ENCODE measurements at regions of chr14 and their contacts with region 1.

Region 1: GRCh38 chr14:50003213-50004031 is 110.5 kb downstream of the ARF6 start:
- DNase-seq: peak; percentile 89
- ATAC-seq: peak; percentile 9
- H3K4me3 ChIP-seq: peak overlapping the region; percentile 64
- H3K27ac ChIP-seq: peak overlapping the region; percentile 97
- H3K4me1 ChIP-seq: peaks cover 72% of the 10 kb centered on the region
- H3K27me3 ChIP-seq: no peaks in the 10 kb centered on the region
- CTCF ChIP-seq: peak; percentile 32; the same call in 1 of the 2 replicates

Region 2: GRCh38 chr14:49816844-49817243 is 186.6 kb before region 1 on chr14:
- CTCF ChIA-PET with region 1: no interaction called
- POLR2A ChIA-PET with region 1: no interaction called
- intact Hi-C with region 1: no loop called
- DNase-seq: no peak
- ATAC-seq: no peak
- H3K4me3 ChIP-seq: no peak overlapping the region
- H3K27ac ChIP-seq: no peak overlapping the region
- H3K4me1 ChIP-seq: no peaks in the 10 kb centered on the region
- H3K27me3 ChIP-seq: no peaks in the 10 kb centered on the region
- CTCF ChIP-seq: no peak

Region 3: DNA sequence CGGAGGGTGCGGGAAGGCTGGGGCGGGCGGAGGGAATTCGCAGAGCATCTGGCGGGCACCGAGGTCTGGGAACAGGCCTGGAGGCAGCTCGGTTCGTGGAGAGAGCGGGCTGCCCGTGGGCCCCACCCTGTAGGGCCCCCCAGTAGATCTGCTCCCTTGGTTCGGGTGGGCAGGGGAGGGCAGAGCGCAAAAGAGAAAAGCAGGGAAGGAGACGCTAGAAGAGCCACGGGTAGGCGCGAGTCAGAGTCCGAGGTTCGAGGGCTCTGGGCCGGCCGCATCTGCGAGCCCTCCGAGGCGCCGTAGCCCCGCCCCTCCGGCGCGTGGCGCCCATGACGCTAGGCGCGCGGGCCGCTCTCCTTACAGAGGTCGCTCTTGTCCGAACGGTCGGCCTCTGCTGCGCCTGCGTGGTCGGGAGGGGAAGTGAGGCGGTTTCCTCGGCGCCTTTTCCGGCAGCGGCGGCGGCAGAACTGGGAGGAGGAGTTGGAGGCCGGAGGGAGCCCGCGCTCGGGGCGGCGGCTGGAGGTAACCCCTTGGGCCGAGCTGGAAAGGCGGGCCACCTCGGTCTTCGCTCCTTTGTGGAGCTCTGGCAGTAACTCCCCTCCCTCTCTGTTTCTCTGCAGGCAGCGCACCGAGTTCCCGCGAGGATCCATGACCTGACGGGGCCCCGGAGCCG is 110.7 kb before region 1 on chr14 and contains the start of gene ARF6:
- CTCF ChIA-PET with region 1: interaction called, 5 read pairs
- POLR2A ChIA-PET with region 1: interaction called, 28 read pairs
- intact Hi-C with region 1: loop called (anchors 1 kb)
- DNase-seq: peak; percentile 99
- ATAC-seq: peak; percentile 81
- H3K4me3 ChIP-seq: peak within 1 kb of the TSS; percentile 91
- H3K27ac ChIP-seq: peak within 1 kb of the TSS; percentile 94
- H3K4me1 ChIP-seq: peaks cover 24% of the 10 kb centered on the region
- H3K27me3 ChIP-seq: no peaks in the 10 kb centered on the region
- CTCF ChIP-seq: no peak
- total RNA-seq, gene ARF6: 86.4 and 107 TPM in 2 replicates

Region 4: DNA sequence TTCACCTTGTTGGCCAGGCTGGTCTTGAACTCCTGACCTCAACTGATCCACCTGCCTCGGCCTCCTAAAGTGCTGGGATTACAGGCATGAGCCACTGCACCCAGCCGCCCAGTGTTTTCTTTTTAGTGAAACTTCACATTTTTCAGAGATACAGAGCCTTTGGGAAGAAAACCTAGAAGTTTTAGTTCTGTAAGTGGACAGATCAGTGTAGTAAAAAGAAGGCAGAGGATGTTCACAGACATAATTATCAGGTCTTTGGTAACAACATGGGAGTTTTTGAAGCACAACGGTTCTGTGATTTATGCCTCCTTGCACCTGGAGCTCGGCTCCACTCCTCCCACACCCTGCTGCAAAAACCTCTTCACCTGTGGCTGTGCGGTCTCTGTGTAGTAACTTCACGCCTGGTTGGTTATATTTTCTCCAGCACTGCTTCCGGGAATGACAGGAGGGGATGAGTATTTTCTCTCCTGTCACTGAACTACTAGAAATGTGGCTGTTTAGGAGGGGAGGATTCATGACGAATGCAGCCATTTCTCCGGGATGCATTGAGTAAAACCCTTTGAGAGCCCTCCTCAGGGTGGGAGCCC is 43.5 kb before region 1 on chr14:
- CTCF ChIA-PET with region 1: interaction called, 6 read pairs
- POLR2A ChIA-PET with region 1: no interaction called
- intact Hi-C with region 1: loop called (anchors 1 kb)
- DNase-seq: no peak
- ATAC-seq: no peak
- H3K4me3 ChIP-seq: no peak overlapping the region
- H3K27ac ChIP-seq: no peak overlapping the region
- H3K4me1 ChIP-seq: peaks cover 30% of the 10 kb centered on the region
- H3K27me3 ChIP-seq: no peaks in the 10 kb centered on the region
- CTCF ChIP-seq: no peak

Region 5: DNA sequence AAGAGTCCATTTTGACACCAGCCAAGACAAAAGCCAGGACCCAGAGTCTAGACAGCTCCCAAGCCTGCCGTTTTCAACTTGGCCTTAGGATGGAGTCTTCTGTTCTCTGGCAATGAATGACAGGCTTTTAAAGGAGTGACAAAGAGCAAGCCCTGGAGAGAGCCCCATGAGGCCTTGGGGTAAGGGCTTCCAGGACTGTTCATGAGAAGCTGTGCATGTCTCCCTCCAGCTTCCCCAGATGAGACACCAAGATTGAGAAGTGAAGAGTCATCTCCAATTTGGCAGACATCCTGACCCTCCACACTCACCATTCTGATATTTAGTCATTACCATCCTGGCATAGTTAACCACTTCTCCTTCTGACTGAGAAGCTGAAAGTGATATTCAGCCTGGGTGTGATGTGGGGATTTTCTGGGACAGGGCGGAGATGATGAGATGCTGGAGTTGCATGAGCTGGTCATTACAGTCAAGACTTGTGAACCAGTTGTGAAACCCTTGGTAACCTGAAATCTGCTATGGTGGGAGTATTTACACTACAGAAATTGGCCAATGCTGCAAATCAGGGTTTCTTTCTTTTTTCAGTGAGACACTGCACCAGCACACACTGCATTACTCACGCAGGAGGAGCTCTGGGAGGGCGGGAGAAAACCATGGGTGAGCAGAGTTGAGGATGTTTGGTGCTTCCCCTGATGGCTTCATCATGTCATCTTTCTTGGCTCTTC is 35.1 kb after region 1 on chr14:
- CTCF ChIA-PET with region 1: interaction called, 3 read pairs
- POLR2A ChIA-PET with region 1: interaction called, 4 read pairs
- intact Hi-C with region 1: loop called (anchors 1 kb)
- DNase-seq: peak; percentile 98
- ATAC-seq: peak; percentile 71
- H3K4me3 ChIP-seq: no peak overlapping the region
- H3K27ac ChIP-seq: peak overlapping the region; percentile 90
- H3K4me1 ChIP-seq: peaks cover 44% of the 10 kb centered on the region
- H3K27me3 ChIP-seq: no peaks in the 10 kb centered on the region
- CTCF ChIP-seq: 0 out of 2 replicates have a peak, but pooled peaks have one; percentile 30

Region 6: GRCh38 chr14:50099335-50099734 is 95.9 kb after region 1 on chr14:
- CTCF ChIA-PET with region 1: interaction called, 8 read pairs
- POLR2A ChIA-PET with region 1: no interaction called
- intact Hi-C with region 1: loop called (anchors 1 kb)
- DNase-seq: peak; percentile 93
- ATAC-seq: peak; percentile 99
- H3K4me3 ChIP-seq: no peak overlapping the region
- H3K27ac ChIP-seq: peak overlapping the region; percentile 66
- H3K4me1 ChIP-seq: peaks cover 38% of the 10 kb centered on the region
- H3K27me3 ChIP-seq: no peaks in the 10 kb centered on the region
- CTCF ChIP-seq: no peak

Measured in PC-3 (cell line).